T-cell (primary cell): ENCODE measurements at regions of chr17 and their contacts with region 1.

Region 1: GRCh38 chr17:17001874-17002520 is 30.1 kb upstream of the TNFRSF13B start:
- DNase-seq: peak; percentile 22 to 85 (median 68)
- ATAC-seq: peak; percentile 87 to 97 (median 93)
- H3K4me3 ChIP-seq: no peak overlapping the region
- H3K4me3 Mint-ChIP-seq: no peak overlapping the region
- H3K27ac ChIP-seq: no peak overlapping the region
- H3K27ac Mint-ChIP-seq: no peak overlapping the region
- H3K4me1 ChIP-seq: peaks cover 0 to 8% of the 10 kb centered on the region in 2 experiments
- H3K4me1 Mint-ChIP-seq: peaks cover 2 to 6% (median 3%) of the 10 kb centered on the region in 3 donors
- H3K27me3 ChIP-seq: peaks cover 0 to 13% of the 10 kb centered on the region in 2 experiments
- H3K27me3 Mint-ChIP-seq: no peaks in the 10 kb centered on the region

Region 2: GRCh38 chr17:16886655-16887322 is 115.2 kb before region 1 on chr17:
- CTCF ChIA-PET with region 1: no interaction called
- POLR2A ChIA-PET with region 1: interaction called in 1 of 2 experiments, 10 read pairs
- DNase-seq: no peak
- ATAC-seq: no peak
- H3K4me3 ChIP-seq: no peak overlapping the region
- H3K4me3 Mint-ChIP-seq: no peak overlapping the region
- H3K27ac ChIP-seq: no peak overlapping the region
- H3K27ac Mint-ChIP-seq: no peak overlapping the region
- H3K4me1 ChIP-seq: no peaks in the 10 kb centered on the region
- H3K4me1 Mint-ChIP-seq: no peaks in the 10 kb centered on the region
- H3K27me3 ChIP-seq: peaks cover 0 to 2% of the 10 kb centered on the region in 2 experiments
- H3K27me3 Mint-ChIP-seq: peaks cover 0 to 4% of the 10 kb centered on the region in 2 donors

Region 3: DNA sequence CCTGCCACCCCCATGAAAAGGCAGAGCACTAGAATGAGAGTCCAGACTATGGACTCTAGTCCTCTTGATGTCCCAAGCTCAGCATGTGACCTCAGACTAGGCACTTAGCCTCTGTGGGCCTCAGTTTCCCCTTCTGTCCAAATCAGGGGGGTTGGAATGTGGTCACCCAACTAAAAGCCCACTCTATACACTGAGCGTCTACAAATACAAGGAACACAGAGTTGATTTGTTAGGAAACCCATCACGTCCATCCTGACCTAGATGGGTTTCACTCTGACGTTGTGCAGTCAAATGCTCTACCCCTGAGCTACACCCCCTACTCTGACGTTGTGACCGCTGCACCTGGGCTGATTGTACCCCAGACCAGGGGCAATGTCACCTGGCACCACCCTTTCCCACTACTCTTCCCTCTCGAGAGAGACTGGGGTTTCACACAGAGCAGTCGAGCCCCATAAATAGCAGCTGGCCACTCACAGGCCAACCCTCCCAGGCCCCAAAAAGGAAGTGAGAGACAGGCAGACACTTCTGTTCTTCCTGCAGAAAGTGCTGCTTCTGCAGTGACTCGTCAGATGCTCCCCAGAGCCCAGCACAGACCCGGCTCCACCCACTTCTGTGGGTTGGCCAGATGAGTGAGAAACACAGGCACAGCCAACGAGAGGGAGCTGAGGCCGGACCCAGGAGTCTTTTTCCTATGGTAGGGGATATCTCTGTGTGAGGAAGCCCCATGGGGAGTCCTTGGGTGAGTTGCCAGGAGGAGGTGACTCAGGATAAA is 14.0 kb before region 1 on chr17:
- CTCF ChIA-PET with region 1: no interaction called
- POLR2A ChIA-PET with region 1: no interaction called
- DNase-seq: peak in 29 of 35 experiments; percentile 12 to 66 (median 35)
- ATAC-seq: peak; percentile 63 to 82 (median 66)
- H3K4me3 ChIP-seq: peak overlapping the region; percentile 4 to 23
- H3K4me3 Mint-ChIP-seq: peak overlapping the region; percentile 43 to 63 (median 62)
- H3K27ac ChIP-seq: peak overlapping the region; percentile 79
- H3K27ac Mint-ChIP-seq: peak overlapping the region; percentile 97 to 99
- H3K4me1 ChIP-seq: peaks cover 34 to 55% of the 10 kb centered on the region in 2 experiments
- H3K4me1 Mint-ChIP-seq: peaks cover 29 to 43% (median 33%) of the 10 kb centered on the region in 3 donors
- H3K27me3 ChIP-seq: no peaks in the 10 kb centered on the region
- H3K27me3 Mint-ChIP-seq: no peaks in the 10 kb centered on the region

Region 4: GRCh38 chr17:17016199-17016866 is 14.3 kb after region 1 on chr17:
- CTCF ChIA-PET with region 1: interaction called, 3 to 13 read pairs
- POLR2A ChIA-PET with region 1: no interaction called
- DNase-seq: peak in 1 of 35 experiments; percentile 46
- ATAC-seq: peak; percentile 49 to 70 (median 62)
- H3K4me3 ChIP-seq: no peak overlapping the region
- H3K4me3 Mint-ChIP-seq: no peak overlapping the region
- H3K27ac ChIP-seq: peak overlapping the region; percentile 52
- H3K27ac Mint-ChIP-seq: peak overlapping the region; percentile 90 to 91
- H3K4me1 ChIP-seq: peaks cover 2 to 35% of the 10 kb centered on the region in 2 experiments
- H3K4me1 Mint-ChIP-seq: peaks cover 33 to 43% (median 39%) of the 10 kb centered on the region in 3 donors
- H3K27me3 ChIP-seq: no peaks in the 10 kb centered on the region
- H3K27me3 Mint-ChIP-seq: no peaks in the 10 kb centered on the region

Region 5: GRCh38 chr17:17313350-17313991 is 311.5 kb after region 1 on chr17:
- CTCF ChIA-PET with region 1: interaction called, 3 to 10 read pairs
- POLR2A ChIA-PET with region 1: no interaction called
- DNase-seq: peak; percentile 56 to 85 (median 70)
- ATAC-seq: peak; percentile 98 to 100 (median 99)
- H3K4me3 ChIP-seq: no peak overlapping the region
- H3K4me3 Mint-ChIP-seq: no peak overlapping the region
- H3K27ac ChIP-seq: no peak overlapping the region
- H3K27ac Mint-ChIP-seq: no peak overlapping the region
- H3K4me1 ChIP-seq: peaks cover 0 to 5% of the 10 kb centered on the region in 2 experiments
- H3K4me1 Mint-ChIP-seq: peaks cover 2 to 6% (median 5%) of the 10 kb centered on the region in 3 donors
- H3K27me3 ChIP-seq: no peaks in the 10 kb centered on the region
- H3K27me3 Mint-ChIP-seq: no peaks in the 10 kb centered on the region